HAP-1 (cell line): ENCODE measurements at regions of chr1 and their contacts with region 1.

Region 1: DNA sequence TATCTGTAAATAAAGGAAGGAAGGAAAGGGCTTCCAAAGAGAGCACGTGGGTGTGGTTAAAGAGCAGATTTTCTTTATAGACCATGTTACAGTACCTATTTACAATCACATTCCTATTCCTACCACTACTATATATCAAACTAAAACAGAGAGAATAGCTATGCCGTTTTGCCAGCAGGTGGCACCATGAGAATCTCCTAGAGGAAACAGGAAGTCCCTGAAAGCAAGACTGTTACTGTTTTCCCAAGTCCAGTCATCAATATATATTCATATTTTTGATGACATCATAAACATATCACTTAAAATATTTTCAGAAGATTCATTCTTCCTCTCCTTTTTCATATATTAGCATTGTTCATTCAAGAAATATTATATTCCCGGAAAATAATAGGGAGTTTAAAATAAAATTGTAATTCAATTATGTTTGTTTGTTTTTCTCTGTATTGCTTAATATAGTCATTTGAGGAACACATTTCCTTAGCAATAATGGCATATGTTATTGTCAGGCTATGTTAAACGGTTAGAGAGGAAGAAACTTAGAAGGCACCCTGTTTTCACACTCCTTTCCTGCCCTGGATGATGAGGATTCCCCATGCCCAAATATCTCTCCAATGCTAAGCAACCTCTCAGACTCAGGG is 6.6 kb downstream of the CCDC190 start:
- DNase-seq: peak; percentile 75
- H3K4me3 ChIP-seq: no peak overlapping the region
- H3K4me1 ChIP-seq: no peaks in the 10 kb centered on the region
- H3K27me3 ChIP-seq: peaks cover 9% of the 10 kb centered on the region

Region 2: DNA sequence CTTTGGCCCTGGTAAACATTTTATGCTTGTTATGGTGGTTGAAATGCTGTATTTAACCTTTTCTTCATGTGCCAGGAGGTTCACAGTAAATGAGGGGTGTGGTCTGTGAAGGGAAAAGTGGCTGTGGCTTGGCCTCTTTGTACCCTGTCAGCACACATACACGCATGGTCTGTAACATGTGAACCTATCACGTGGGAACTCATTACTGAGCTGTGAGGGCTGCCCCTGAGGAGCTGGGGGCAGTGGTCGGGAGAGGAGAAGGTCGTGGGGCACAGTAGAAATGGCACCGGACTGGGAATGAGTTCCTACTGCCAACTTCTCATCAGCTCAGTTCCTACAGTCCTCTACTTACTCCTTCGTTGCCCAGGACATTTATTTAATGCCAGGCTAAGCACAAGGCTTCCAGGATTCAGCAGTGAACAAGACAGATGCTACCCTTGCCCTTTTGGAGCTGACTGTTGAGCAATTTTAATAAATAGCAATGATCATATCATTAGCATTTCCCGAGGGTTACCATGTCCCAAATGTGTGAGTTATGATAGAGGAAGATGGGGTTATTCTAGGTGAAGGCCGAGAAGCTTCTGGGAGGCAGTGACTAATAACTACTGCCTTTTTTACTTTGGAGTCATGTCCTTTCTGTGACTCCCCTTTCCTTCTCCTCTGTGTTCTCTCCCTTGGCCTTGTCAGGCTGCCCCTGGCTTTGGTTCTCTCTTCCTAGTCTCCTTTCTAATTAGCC is 183.3 kb before region 1 on chr1:
- in situ Hi-C with region 1: no loop called
- DNase-seq: no peak
- H3K4me3 ChIP-seq: no peak overlapping the region
- H3K4me1 ChIP-seq: no peaks in the 10 kb centered on the region
- H3K27me3 ChIP-seq: no peaks in the 10 kb centered on the region

Region 3: DNA sequence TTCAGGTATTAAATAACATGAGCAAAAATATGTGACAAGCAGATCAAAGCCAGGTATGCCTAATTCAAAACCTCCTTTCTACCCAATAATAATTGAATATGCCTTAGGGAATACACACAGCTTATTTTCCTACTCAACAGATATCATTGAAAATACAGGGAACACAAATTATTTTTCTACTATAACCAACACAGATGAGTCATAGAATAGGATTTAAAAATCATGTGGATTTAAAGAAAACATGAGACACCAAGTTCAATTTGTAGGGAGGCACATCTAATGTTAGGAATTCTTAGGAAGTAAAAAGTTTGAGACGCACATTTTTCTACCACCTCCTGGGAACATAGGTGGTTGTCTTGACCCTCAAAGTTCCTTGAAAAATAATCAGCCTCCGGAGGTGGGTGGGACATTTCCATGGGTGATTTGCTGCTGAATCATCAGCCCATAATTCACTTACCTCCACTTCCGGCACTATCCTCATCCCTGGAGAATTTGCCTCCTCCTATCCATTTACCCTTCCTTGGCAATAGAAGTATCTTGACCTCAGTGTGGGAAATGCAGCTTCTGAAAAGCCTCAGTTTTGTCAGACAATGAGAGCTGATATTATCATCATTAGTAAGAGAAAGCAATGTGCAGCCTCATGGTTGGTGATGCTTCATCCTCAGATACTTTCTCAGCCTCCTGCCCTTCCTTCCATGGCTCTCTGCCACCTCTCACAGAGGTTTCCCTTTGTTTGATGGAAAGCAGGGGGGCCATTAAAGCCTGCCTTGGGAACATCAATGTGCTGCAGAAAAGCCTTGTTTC is 181.3 kb after region 1 on chr1:
- in situ Hi-C with region 1: no loop called
- DNase-seq: no peak
- H3K4me3 ChIP-seq: no peak overlapping the region
- H3K4me1 ChIP-seq: no peaks in the 10 kb centered on the region
- H3K27me3 ChIP-seq: no peaks in the 10 kb centered on the region

Region 4: DNA sequence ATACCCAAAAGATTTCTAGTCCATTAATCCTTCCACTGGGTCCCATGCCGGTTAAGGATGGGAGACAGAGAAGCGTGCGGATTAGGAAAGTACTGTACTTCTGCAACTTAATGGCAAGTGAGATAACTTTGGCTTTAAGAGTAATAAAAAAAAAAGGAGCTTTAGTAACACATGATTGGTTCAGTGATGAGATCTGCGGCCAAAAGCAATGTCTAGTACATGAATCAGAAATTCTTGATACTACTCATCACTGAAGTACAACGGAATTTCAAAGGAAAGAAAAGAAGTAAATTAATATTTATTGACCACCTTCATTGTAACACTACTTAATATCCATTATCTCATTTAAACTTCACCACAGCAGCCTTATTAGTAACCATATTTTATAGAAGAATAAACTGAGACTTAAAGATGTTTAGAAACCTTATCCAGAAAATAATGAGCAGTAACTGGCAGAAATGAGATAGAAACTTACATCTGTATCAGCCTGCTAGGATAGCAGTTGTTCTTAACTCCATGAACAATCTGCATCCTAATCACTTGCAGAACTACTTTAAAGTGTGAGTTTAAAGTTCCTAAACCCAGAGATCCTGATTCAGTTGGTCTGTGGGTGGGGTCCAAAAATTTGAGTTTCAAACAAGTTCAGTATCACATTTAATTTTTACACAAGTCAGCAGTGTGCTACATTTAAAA is 453.3 kb after region 1 on chr1:
- in situ Hi-C with region 1: loop called (anchors 10 kb)
- DNase-seq: no peak
- H3K4me3 ChIP-seq: no peak overlapping the region
- H3K4me1 ChIP-seq: no peaks in the 10 kb centered on the region
- H3K27me3 ChIP-seq: no peaks in the 10 kb centered on the region